ENCODE measurements at regions of chr13 and their contacts with region 1.

Region 1: DNA sequence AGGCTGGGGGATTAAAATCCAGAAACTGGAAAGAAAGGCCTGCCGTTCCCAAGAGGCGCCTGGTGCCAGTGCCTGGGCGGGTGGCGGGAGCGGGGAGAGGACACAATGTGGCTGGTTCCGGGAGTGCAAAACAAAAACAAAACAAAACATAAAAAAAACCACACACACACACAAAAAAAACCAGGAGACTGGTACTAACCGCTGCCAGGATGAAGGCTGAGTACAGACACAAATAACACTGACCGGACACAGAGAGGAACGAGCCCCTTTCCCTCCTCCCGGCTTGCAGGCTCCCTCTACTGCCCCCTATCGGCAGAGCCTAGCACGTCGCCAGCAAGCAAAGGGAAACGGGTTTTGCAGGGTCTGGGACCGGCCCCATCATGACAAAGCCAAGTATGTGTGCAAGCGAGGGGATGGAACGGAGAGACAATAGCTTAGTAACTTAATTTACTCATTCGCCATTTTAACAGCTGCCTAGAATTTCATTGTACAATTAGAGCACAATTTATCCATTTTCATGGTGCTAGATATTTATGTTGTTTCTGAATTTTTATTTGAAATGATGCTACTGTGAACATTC is 17.9 kb upstream of the ZDHHC20 start:
- DNase-seq: peak; percentile 73
- H3K4me3 ChIP-seq: peak overlapping the region in 2 of 3 experiments; percentile 0 to 2
- H3K27ac ChIP-seq: no peak overlapping the region
- H3K4me1 ChIP-seq: no peaks in the 10 kb centered on the region
- H3K27me3 ChIP-seq: no peaks in the 10 kb centered on the region
- CTCF ChIP-seq: peak; percentile 85 to 99

Region 2: GRCh38 chr13:20495082-20496023 is 981.6 kb before region 1 on chr13:
- CTCF ChIA-PET with region 1: no interaction called
- dilution Hi-C with region 1: no loop called
- in situ Hi-C with region 1: no loop called
- intact Hi-C with region 1: loop called (anchors 5 kb)
- DNase-seq: peak; percentile 56
- H3K4me3 ChIP-seq: no peak overlapping the region
- H3K27ac ChIP-seq: no peak overlapping the region
- H3K4me1 ChIP-seq: peaks cover 10% of the 10 kb centered on the region
- H3K27me3 ChIP-seq: no peaks in the 10 kb centered on the region
- CTCF ChIP-seq: peak; percentile 91 to 98

Region 3: GRCh38 chr13:20945952-20946383 is 531.0 kb before region 1 on chr13:
- CTCF ChIA-PET with region 1: no interaction called
- dilution Hi-C with region 1: no loop called
- in situ Hi-C with region 1: loop called (anchors 10 to 25 kb)
- intact Hi-C with region 1: loop called (anchors 1 kb)
- DNase-seq: no peak
- H3K4me3 ChIP-seq: no peak overlapping the region
- H3K27ac ChIP-seq: no peak overlapping the region
- H3K4me1 ChIP-seq: no peaks in the 10 kb centered on the region
- H3K27me3 ChIP-seq: no peaks in the 10 kb centered on the region
- CTCF ChIP-seq: no peak

Region 4: DNA sequence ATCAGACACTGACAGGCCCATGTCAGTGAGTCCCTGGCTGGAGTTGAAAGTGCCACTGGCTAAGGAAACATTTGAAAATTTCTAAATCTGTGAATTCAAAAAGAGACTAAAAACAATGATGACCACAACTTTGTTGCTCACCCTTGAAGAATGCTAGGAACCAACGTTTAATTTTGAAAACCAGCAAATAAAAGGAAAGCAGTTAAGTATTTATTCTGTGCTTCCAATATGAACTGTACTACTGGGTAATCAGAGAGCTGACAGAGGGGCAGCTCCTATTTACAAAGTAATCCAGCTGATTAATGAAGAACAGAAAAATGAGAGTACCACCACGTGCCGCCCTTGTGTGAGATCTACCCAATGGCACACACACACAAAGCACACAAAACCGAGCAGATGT is 370.9 kb before region 1 on chr13:
- CTCF ChIA-PET with region 1: no interaction called
- dilution Hi-C with region 1: no loop called
- in situ Hi-C with region 1: loop called in 1 of 2 experiments (anchors 25 kb)
- intact Hi-C with region 1: loop called (anchors 1 kb)
- DNase-seq: no peak
- H3K4me3 ChIP-seq: no peak overlapping the region
- H3K27ac ChIP-seq: no peak overlapping the region
- H3K4me1 ChIP-seq: peaks cover 5% of the 10 kb centered on the region
- H3K27me3 ChIP-seq: no peaks in the 10 kb centered on the region
- CTCF ChIP-seq: no peak

Region 5: GRCh38 chr13:21124852-21125251 is 352.1 kb before region 1 on chr13:
- CTCF ChIA-PET with region 1: no interaction called
- dilution Hi-C with region 1: no loop called
- in situ Hi-C with region 1: loop called in 1 of 2 experiments (anchors 25 kb)
- intact Hi-C with region 1: no loop called
- DNase-seq: no peak
- H3K4me3 ChIP-seq: no peak overlapping the region
- H3K27ac ChIP-seq: no peak overlapping the region
- H3K4me1 ChIP-seq: no peaks in the 10 kb centered on the region
- H3K27me3 ChIP-seq: no peaks in the 10 kb centered on the region
- CTCF ChIP-seq: no peak

Region 6: GRCh38 chr13:21176220-21176982 is 300.6 kb before region 1 on chr13 and contains the starts of genes MRPL57 and SKA3:
- CTCF ChIA-PET with region 1: no interaction called
- dilution Hi-C with region 1: no loop called
- in situ Hi-C with region 1: no loop called
- intact Hi-C with region 1: loop called (anchors 2 kb)
- DNase-seq: peak; percentile 94
- H3K4me3 ChIP-seq: peak within 1 kb of the TSS; percentile 86 to 95 (median 90)
- H3K27ac ChIP-seq: peak within 1 kb of the TSS; percentile 80
- H3K4me1 ChIP-seq: peaks cover 7% of the 10 kb centered on the region
- H3K27me3 ChIP-seq: no peaks in the 10 kb centered on the region
- CTCF ChIP-seq: no peak
- total RNA-seq, gene MRPL57: 14.5 to 18.8 TPM
- total RNA-seq, gene SKA3: 5.0 to 14.6 TPM

Region 7: DNA sequence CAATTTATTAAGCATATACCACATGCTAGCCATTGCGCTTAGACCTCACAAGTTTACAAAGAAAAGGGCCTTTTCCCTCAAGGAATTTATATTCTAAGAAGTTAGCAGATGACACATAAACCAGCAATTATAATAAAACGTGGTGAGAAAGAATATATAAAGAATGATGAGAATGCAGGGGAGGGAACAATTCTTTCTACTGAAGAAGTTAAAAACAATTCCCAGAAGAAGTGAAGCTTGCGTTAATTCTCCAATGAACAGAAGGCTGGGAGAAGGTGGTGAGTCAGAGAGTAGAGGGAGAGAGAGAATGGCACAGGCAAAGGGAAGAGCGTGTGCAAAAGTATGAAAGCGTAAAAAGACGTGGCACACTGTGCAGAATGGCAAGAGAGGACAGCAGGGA is 51.6 kb after region 1 on chr13:
- CTCF ChIA-PET with region 1: no interaction called
- dilution Hi-C with region 1: no loop called
- in situ Hi-C with region 1: no loop called
- intact Hi-C with region 1: no loop called
- DNase-seq: no peak
- H3K4me3 ChIP-seq: no peak overlapping the region
- H3K27ac ChIP-seq: no peak overlapping the region
- H3K4me1 ChIP-seq: no peaks in the 10 kb centered on the region
- H3K27me3 ChIP-seq: no peaks in the 10 kb centered on the region
- CTCF ChIP-seq: no peak

Region 8: DNA sequence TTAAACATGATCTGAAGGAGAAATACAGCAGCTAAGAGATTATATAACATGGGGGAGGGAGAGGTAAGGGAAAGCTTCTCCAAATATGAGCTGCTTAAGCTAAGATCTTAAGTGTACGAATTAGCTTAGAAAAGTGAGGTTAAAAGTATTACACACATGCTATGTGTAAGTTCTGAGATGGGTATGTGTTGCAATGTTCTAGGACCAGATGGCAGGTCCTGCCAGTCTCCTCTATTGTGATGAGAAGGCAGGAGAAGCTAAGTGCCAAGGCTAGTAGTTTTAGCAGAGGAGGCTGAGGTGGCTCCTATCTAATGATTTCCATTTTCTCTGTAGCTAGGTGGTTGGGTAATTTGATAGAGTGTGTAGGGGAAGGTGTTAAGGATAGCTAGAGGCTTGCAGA is 69.4 kb after region 1 on chr13:
- CTCF ChIA-PET with region 1: no interaction called
- dilution Hi-C with region 1: no loop called
- in situ Hi-C with region 1: no loop called
- intact Hi-C with region 1: no loop called
- DNase-seq: no peak
- H3K4me3 ChIP-seq: no peak overlapping the region
- H3K27ac ChIP-seq: no peak overlapping the region
- H3K4me1 ChIP-seq: no peaks in the 10 kb centered on the region
- H3K27me3 ChIP-seq: no peaks in the 10 kb centered on the region
- CTCF ChIP-seq: no peak

Region 9: GRCh38 chr13:21557995-21558394 is 81.0 kb after region 1 on chr13:
- CTCF ChIA-PET with region 1: no interaction called
- dilution Hi-C with region 1: no loop called
- in situ Hi-C with region 1: no loop called
- intact Hi-C with region 1: loop called (anchors 5 kb)
- DNase-seq: peak; percentile 22
- H3K4me3 ChIP-seq: no peak overlapping the region
- H3K27ac ChIP-seq: no peak overlapping the region
- H3K4me1 ChIP-seq: no peaks in the 10 kb centered on the region
- H3K27me3 ChIP-seq: no peaks in the 10 kb centered on the region
- CTCF ChIP-seq: peak; percentile 52 to 54

Region 10: GRCh38 chr13:21638319-21639282 is 161.6 kb after region 1 on chr13:
- CTCF ChIA-PET with region 1: no interaction called
- dilution Hi-C with region 1: no loop called
- in situ Hi-C with region 1: no loop called
- intact Hi-C with region 1: no loop called
- DNase-seq: peak; percentile 75
- H3K4me3 ChIP-seq: no peak overlapping the region
- H3K27ac ChIP-seq: peak overlapping the region; percentile 55
- H3K4me1 ChIP-seq: peaks cover 26% of the 10 kb centered on the region
- H3K27me3 ChIP-seq: no peaks in the 10 kb centered on the region
- CTCF ChIP-seq: peak; percentile 61 to 62

Region 11: DNA sequence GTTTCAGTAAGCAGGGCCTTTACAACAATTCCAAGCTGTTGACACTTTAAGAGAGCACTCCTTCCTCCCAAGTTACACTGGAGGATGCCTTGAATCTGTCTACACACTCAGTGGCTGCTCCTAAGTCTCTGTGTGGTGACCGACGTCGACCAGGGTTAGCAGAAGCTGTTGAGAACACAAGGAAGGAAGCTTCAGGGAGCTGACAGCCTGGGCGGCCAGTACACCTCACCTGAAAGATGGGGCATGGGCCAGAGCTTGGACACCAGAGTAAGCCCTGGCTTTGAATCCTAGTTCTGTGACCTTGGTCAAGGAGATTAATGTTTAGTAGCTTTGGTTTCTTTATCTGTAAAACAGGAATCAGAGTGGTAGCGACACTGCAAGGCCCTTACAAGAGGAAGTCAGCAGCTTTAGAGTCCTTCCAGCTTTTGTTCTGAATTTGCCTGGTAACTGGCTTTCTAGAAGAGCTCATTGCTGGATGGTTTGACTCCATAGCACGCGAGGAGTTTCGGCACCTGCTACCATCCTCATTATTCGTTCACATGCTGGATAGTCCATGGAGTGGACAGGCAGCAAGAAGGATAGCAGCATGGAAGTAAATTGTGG is 408.1 kb after region 1 on chr13:
- CTCF ChIA-PET with region 1: no interaction called
- dilution Hi-C with region 1: no loop called
- in situ Hi-C with region 1: no loop called
- intact Hi-C with region 1: no loop called
- DNase-seq: no peak
- H3K4me3 ChIP-seq: no peak overlapping the region
- H3K27ac ChIP-seq: no peak overlapping the region
- H3K4me1 ChIP-seq: no peaks in the 10 kb centered on the region
- H3K27me3 ChIP-seq: no peaks in the 10 kb centered on the region
- CTCF ChIP-seq: no peak